Activated CD4-positive, alpha-beta T cell treated with anti-CD3 and anti-CD28 coated beads, Interleukin-2, amount 10 ng/mL, durations not matched to agents 24 days and 14 days (primary cell): ENCODE measurements at regions of chr6 and their contacts with region 1.

Region 1: DNA sequence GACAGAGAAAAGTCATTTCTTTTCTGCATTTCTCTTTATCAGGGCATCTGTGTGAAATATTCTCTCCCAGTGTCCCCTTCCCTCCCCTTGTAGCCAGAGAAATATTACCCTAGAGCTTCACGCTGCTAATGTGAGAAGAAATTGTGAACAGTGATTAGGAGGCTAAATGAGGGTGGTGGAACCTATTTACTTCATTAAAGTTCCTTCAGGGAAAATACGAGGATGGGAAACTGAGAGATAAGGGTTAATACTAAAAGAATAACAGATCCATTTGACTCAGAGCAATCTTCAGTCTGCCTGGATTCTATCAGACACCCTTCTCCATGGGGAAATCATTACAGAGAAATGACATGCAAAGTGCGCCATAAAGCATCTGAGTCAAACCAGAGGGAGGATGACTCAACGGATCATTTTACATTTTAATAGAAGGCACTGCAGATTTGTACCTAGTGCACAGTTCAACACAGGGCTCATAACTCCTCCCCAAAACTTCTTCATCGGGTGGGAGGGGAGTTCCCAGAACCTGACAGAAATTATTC is 131.3 kb downstream of the GJA10 start:
- DNase-seq: peak; percentile 72
- H3K4me3 Mint-ChIP-seq: peak overlapping the region; percentile 56
- H3K27ac Mint-ChIP-seq: peak overlapping the region; percentile 90
- H3K4me1 Mint-ChIP-seq: peaks cover 66% of the 10 kb centered on the region
- H3K27me3 Mint-ChIP-seq: no peaks in the 10 kb centered on the region

Region 2: GRCh38 chr6:89952686-89953085 is 72.9 kb before region 1 on chr6:
- intact Hi-C with region 1: loop called (anchors 1 kb)
- DNase-seq: peak; percentile 89
- H3K4me3 Mint-ChIP-seq: peak overlapping the region; percentile 69
- H3K27ac Mint-ChIP-seq: peak overlapping the region; percentile 84
- H3K4me1 Mint-ChIP-seq: peaks cover 63% of the 10 kb centered on the region
- H3K27me3 Mint-ChIP-seq: no peaks in the 10 kb centered on the region

Region 3: GRCh38 chr6:90008908-90009501 is 16.6 kb before region 1 on chr6:
- intact Hi-C with region 1: loop called (anchors 1 kb)
- DNase-seq: peak; percentile 54
- H3K4me3 Mint-ChIP-seq: peak overlapping the region; percentile 40
- H3K27ac Mint-ChIP-seq: peak overlapping the region; percentile 85
- H3K4me1 Mint-ChIP-seq: peaks cover 33% of the 10 kb centered on the region
- H3K27me3 Mint-ChIP-seq: no peaks in the 10 kb centered on the region

Region 4: GRCh38 chr6:90068264-90068663 is 42.7 kb after region 1 on chr6:
- intact Hi-C with region 1: loop called (anchors 1 kb)
- DNase-seq: no peak
- H3K4me3 Mint-ChIP-seq: peak overlapping the region; percentile 57
- H3K27ac Mint-ChIP-seq: peak overlapping the region; percentile 81
- H3K4me1 Mint-ChIP-seq: peaks cover 72% of the 10 kb centered on the region
- H3K27me3 Mint-ChIP-seq: no peaks in the 10 kb centered on the region

Region 5: DNA sequence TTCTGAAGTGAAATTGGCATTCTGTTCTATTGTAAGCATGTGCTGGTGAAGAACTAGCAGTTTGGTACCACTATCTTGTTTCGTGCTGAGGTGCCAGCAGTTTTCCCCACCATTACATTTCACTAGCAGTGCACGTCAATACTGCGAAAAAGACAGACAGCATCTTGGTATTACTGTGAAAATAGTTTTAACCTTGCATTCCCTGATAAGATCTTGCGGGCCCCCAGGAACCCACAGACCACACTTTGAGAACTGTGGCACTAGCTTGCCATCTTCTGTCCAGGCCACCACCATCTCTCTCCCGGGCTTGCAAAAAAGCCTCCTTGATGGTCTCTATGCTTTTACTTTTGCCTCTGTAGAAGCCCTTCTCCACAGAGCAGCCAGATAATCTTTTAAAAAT is 85.4 kb after region 1 on chr6:
- intact Hi-C with region 1: no loop called
- DNase-seq: peak; percentile 90
- H3K4me3 Mint-ChIP-seq: peak overlapping the region; percentile 36
- H3K27ac Mint-ChIP-seq: peak overlapping the region; percentile 63
- H3K4me1 Mint-ChIP-seq: peaks cover 58% of the 10 kb centered on the region
- H3K27me3 Mint-ChIP-seq: no peaks in the 10 kb centered on the region

Region 6: GRCh38 chr6:90251295-90251992 is 225.9 kb after region 1 on chr6:
- intact Hi-C with region 1: loop called (anchors 1 kb)
- DNase-seq: peak; percentile 30
- H3K4me3 Mint-ChIP-seq: peak overlapping the region; percentile 49
- H3K27ac Mint-ChIP-seq: peak overlapping the region; percentile 95
- H3K4me1 Mint-ChIP-seq: peaks cover 68% of the 10 kb centered on the region
- H3K27me3 Mint-ChIP-seq: no peaks in the 10 kb centered on the region